ENCODE measurements at regions of chr12 and their contacts with region 1.

Region 1: GRCh38 chr12:105382771-105383622 is 52.5 kb downstream of the C12orf75 start:
- DNase-seq: peak in 3 of 9 experiments; percentile 33 to 76 (median 67)
- ATAC-seq: peak; percentile 75
- H3K4me3 ChIP-seq: no peak overlapping the region
- H3K4me3 Mint-ChIP-seq: no peak overlapping the region
- H3K27ac ChIP-seq: no peak overlapping the region
- H3K27ac Mint-ChIP-seq: no peak overlapping the region
- H3K4me1 ChIP-seq: no peaks in the 10 kb centered on the region
- H3K4me1 Mint-ChIP-seq: no peaks in the 10 kb centered on the region
- H3K27me3 ChIP-seq: no peaks in the 10 kb centered on the region
- H3K27me3 Mint-ChIP-seq: no peaks in the 10 kb centered on the region
- CTCF ChIP-seq: peak; percentile 83

Region 2: DNA sequence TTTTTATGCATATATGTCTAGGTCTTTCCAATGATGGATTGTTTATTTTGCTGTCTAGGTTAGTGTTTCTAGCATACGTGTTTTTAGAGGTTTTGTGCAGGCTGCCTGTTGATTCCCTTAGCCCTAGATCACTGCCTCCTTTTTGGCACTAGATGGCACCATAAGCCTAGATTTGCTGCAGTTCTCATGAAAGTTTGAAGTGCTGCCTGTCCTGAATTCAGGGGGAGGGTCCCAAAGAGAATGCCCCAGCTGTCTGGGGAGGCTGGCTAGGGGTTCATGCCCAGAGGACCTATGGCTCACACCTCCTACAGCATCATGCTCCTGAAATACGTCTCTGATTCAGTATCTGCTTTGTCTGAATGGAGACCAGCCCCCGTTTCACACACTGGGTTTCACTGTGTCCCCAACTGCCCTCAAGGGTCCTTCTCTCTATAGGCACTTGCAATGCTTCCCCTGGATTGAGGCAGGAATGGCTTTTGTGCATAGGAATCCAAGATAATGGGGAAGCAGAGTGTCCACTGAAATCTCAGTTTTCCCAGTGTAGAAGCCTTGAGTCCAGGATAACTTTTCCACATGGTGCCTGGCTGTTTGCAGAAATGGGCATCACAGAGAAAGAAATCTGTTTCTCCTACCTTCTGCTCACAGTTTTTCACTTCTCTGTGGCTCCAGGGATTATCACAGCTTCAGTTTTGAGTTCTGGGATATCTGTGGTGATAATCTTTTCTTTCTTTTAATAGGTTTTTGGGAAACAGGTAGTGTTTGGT is 1181.6 kb before region 1 on chr12:
- CTCF ChIA-PET with region 1: no interaction called
- POLR2A ChIA-PET with region 1: no interaction called
- intact Hi-C with region 1: loop called in 1 of 2 experiments (anchors 1 kb)
- DNase-seq: peak; percentile 7 to 80 (median 39)
- ATAC-seq: peak; percentile 57
- H3K4me3 ChIP-seq: no peak overlapping the region
- H3K4me3 Mint-ChIP-seq: no peak overlapping the region
- H3K27ac ChIP-seq: no peak overlapping the region
- H3K27ac Mint-ChIP-seq: no peak overlapping the region
- H3K4me1 ChIP-seq: no peaks in the 10 kb centered on the region
- H3K4me1 Mint-ChIP-seq: peaks cover 2% of the 10 kb centered on the region
- H3K27me3 ChIP-seq: no peaks in the 10 kb centered on the region
- H3K27me3 Mint-ChIP-seq: peaks cover 15% of the 10 kb centered on the region
- CTCF ChIP-seq: peak; percentile 87

Region 3: GRCh38 chr12:105158876-105159275 is 224.1 kb before region 1 on chr12:
- CTCF ChIA-PET with region 1: no interaction called
- POLR2A ChIA-PET with region 1: no interaction called
- intact Hi-C with region 1: loop called in 1 of 2 experiments (anchors 5 kb)
- DNase-seq: no peak
- ATAC-seq: no peak
- H3K4me3 ChIP-seq: no peak overlapping the region
- H3K4me3 Mint-ChIP-seq: no peak overlapping the region
- H3K27ac ChIP-seq: no peak overlapping the region
- H3K27ac Mint-ChIP-seq: no peak overlapping the region
- H3K4me1 ChIP-seq: no peaks in the 10 kb centered on the region
- H3K4me1 Mint-ChIP-seq: peaks cover 2% of the 10 kb centered on the region
- H3K27me3 ChIP-seq: no peaks in the 10 kb centered on the region
- H3K27me3 Mint-ChIP-seq: no peaks in the 10 kb centered on the region
- CTCF ChIP-seq: no peak

Region 4: GRCh38 chr12:105235732-105236476 is 147.1 kb before region 1 on chr12 and contains the start of gene APPL2:
- CTCF ChIA-PET with region 1: no interaction called
- POLR2A ChIA-PET with region 1: interaction called, 5 read pairs
- intact Hi-C with region 1: loop called (anchors 2 to 5 kb)
- DNase-seq: peak; percentile 62 to 91 (median 82)
- ATAC-seq: peak; percentile 73
- H3K4me3 ChIP-seq: peak within 1 kb of the TSS; percentile 75 to 77
- H3K4me3 Mint-ChIP-seq: peak within 1 kb of the TSS; percentile 93
- H3K27ac ChIP-seq: peak within 1 kb of the TSS; percentile 79 to 87
- H3K27ac Mint-ChIP-seq: peak within 1 kb of the TSS; percentile 97
- H3K4me1 ChIP-seq: peaks cover 36% of the 10 kb centered on the region
- H3K4me1 Mint-ChIP-seq: peaks cover 51% of the 10 kb centered on the region
- H3K27me3 ChIP-seq: no peaks in the 10 kb centered on the region
- H3K27me3 Mint-ChIP-seq: no peaks in the 10 kb centered on the region
- CTCF ChIP-seq: no peak
- total RNA-seq, gene APPL2: 53.1 to 60.6 TPM

Region 5: DNA sequence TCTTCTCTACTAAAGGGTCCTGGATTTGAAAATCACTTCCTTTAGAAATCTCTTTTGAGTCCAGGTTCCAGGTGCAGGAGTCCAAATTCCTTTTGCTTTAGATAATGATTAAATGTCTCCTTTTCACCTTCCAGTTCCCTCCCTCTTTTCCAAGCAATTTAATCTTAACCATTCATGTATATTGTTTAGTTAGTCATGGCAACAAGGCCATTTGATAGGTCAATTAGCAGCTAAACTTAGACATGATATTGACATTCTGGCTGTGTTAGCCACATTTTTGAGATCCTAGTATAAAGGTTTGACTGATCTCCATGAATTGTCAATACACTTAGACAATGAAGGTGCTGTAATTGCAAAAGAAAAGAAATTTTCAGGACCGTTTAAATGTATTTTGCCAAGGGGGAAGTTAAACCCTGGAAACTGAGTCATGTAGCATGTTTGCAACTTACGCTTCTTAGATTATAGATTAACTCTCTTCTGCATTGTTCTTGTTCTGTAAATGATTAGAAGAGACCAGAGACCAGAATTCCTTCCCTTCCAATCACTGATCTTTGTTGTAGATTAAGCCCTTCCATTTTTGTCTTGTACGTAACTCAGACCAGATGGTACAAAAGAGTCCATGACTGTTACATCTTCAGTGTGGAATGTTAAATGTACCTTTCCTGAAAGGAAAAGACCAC is 64.9 kb before region 1 on chr12:
- CTCF ChIA-PET with region 1: interaction called, 47 read pairs
- POLR2A ChIA-PET with region 1: no interaction called
- intact Hi-C with region 1: loop called (anchors 1 kb)
- DNase-seq: no peak
- ATAC-seq: no peak
- H3K4me3 ChIP-seq: no peak overlapping the region
- H3K4me3 Mint-ChIP-seq: no peak overlapping the region
- H3K27ac ChIP-seq: no peak overlapping the region
- H3K27ac Mint-ChIP-seq: no peak overlapping the region
- H3K4me1 ChIP-seq: peaks cover 4% of the 10 kb centered on the region
- H3K4me1 Mint-ChIP-seq: peaks cover 14% of the 10 kb centered on the region
- H3K27me3 ChIP-seq: no peaks in the 10 kb centered on the region
- H3K27me3 Mint-ChIP-seq: no peaks in the 10 kb centered on the region
- CTCF ChIP-seq: no peak